Sigmoid colon (tissue), 7 donors: ENCODE measurements at regions of chr12 and their contacts with region 1.

Region 1: GRCh38 chr12:123232807-123233543 is at the starts of genes MPHOSPH9 and MTRFR:
- DNase-seq: peak; percentile 100
- H3K4me3 ChIP-seq: peak within 1 kb of the TSS; percentile 59 to 94 (median 86)
- H3K27ac ChIP-seq: peak within 1 kb of the TSS; percentile 90 to 95 (median 93)
- H3K4me1 ChIP-seq: peaks cover 0 to 42% (median 24%) of the 10 kb centered on the region in 4 donors
- H3K27me3 ChIP-seq: no peaks in the 10 kb centered on the region
- CTCF ChIP-seq: no peak
- EP300 ChIP-seq: no peak
- POLR2A ChIP-seq: peak; percentile 94 to 97
- total RNA-seq, gene MPHOSPH9: 17.4 to 47.6 (median 22.6) TPM
- total RNA-seq, gene MTRFR: 9.3 to 19.1 (median 13.5) TPM

Region 2: DNA sequence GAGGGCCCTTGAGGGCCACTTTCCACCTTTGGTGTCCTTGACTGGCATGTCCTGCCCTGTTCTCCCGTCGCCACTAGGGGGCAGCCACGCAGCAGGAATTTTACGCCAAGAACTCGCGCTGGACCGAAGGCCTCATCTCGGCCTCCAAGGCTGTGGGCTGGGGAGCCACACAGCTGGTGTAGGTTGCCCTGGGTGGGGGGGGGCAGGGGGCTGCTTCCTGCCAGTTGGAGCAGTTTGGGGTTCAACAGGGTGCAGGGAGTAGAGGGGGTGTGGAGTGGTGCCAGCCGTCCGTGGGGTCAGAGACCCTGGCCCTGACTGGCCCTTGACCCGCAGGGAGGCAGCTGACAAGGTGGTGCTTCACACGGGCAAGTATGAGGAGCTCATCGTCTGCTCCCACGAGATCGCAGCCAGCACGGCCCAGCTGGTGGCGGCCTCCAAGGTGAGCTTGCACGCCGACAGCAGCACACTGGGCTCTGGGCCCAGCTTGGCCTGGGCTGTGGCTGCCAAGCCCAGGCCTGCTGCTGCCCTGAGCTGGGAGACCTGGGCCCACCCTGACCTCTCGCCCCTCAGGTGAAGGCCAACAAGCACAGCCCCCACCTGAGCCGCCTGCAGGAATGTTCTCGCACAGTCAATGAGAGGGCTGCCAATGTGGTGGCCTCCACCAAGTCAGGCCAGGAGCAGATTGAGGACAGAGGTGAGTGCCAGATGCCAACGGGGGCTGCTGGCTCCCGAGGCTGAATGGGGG is 372.5 kb before region 1 on chr12:
- intact Hi-C with region 1: loop called (anchors 2 kb)
- DNase-seq: peak; percentile 92
- H3K4me3 ChIP-seq: no peak overlapping the region
- H3K27ac ChIP-seq: peak overlapping the region in 2 of 4 donors; percentile 14 to 62
- H3K4me1 ChIP-seq: peaks cover 0 to 10% (median 8%) of the 10 kb centered on the region in 4 donors
- H3K27me3 ChIP-seq: no peaks in the 10 kb centered on the region
- CTCF ChIP-seq: peak; percentile 91 to 97 (median 95)
- EP300 ChIP-seq: no peak
- POLR2A ChIP-seq: no peak

Region 3: DNA sequence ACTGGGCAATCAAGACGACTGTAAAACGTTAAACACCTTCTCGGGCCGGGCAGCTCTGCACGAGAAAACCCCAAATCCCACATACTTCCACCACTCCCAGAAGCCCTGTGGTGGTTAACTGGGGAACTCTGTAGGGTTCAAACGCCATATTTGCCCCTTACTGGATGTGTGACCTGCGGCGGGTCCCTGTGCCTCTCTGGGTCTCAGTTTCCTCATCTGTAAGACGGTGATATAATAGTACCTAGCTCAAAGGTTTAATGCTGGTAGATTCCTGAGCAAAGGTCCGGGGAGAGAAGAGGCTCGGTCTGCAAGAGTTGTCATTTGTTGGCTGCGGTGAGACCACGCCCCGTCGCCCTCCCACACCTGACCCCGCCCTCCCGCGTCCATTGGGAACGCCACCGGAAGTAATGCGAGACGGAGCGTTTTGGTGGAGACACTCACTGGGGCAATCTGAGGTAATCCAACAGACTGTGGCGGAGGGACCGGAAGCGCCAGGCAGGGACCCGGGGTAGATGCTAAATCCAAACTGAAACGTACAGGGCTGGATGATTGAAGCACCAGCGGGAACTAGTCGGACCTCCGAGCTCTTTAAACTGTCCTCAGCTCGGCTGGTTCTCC is 258.6 kb before region 1 on chr12:
- intact Hi-C with region 1: loop called (anchors 2 kb)
- DNase-seq: peak; percentile 99
- H3K4me3 ChIP-seq: peak overlapping the region; percentile 84 to 96 (median 89)
- H3K27ac ChIP-seq: peak overlapping the region; percentile 97 to 99 (median 98)
- H3K4me1 ChIP-seq: peaks cover 0 to 49% (median 38%) of the 10 kb centered on the region in 4 donors
- H3K27me3 ChIP-seq: no peaks in the 10 kb centered on the region
- CTCF ChIP-seq: no peak
- EP300 ChIP-seq: no peak
- POLR2A ChIP-seq: no peak

Region 4: DNA sequence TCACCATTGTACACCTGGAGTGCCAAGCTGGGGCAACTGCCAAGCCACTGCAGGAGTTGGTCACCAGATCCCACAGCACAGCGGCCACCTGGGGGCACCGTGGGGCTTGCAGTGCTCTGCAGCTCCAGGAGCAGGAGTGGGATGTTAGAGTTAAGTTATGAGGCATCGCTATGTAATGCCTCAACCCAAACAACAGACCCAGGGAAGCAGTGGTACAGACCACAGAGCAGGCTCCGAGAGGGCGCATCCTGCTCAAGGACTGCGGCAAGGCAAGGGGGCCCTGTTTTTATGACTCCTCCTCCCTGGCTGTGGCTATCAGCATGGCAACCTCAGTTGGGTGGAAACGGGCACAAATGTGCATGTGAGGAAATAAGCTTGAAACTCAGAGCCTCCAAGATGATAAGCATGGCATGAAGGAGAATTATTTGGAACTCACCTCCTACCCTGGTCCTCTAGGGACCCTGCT is 189.4 kb before region 1 on chr12:
- intact Hi-C with region 1: loop called (anchors 1 kb)
- DNase-seq: peak; percentile 95
- H3K4me3 ChIP-seq: no peak overlapping the region
- H3K27ac ChIP-seq: peak overlapping the region; percentile 63 to 82 (median 76)
- H3K4me1 ChIP-seq: peaks cover 0 to 69% (median 51%) of the 10 kb centered on the region in 4 donors
- H3K27me3 ChIP-seq: no peaks in the 10 kb centered on the region
- CTCF ChIP-seq: peak; percentile 71 to 89 (median 80)
- EP300 ChIP-seq: no peak
- POLR2A ChIP-seq: no peak

Region 5: GRCh38 chr12:123150744-123151456 is 82.1 kb before region 1 on chr12 and contains the start of gene PITPNM2:
- intact Hi-C with region 1: loop called (anchors 5 kb)
- DNase-seq: peak; percentile 78
- H3K4me3 ChIP-seq: peak within 1 kb of the TSS; percentile 54 to 86 (median 82)
- H3K27ac ChIP-seq: peak within 1 kb of the TSS; percentile 88 to 95 (median 92)
- H3K4me1 ChIP-seq: peaks cover 0 to 33% (median 28%) of the 10 kb centered on the region in 4 donors
- H3K27me3 ChIP-seq: no peaks in the 10 kb centered on the region
- CTCF ChIP-seq: peak in 1 of 4 experiments; percentile 33
- EP300 ChIP-seq: no peak
- POLR2A ChIP-seq: no peak
- total RNA-seq, gene PITPNM2: 6.4 to 19.5 (median 11.7) TPM

Region 6: DNA sequence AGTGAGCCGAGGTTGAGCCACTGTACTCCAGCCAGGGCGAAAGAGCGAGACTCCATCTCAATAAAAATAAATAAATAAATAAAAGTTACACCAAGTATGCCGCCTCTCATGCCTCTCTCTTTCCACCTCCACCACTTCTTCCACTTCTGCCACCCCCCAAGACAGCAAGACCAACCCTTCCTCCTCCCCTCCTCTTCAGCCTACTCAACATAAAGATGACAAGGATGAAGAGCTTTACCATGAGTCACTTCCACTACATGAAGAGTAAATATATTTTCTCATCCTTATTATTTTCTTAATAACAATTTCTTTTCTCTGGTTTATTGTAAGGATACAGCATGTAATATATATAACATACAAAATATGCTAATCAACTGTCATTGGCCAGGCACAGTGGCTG is 347.8 kb after region 1 on chr12:
- intact Hi-C with region 1: loop called (anchors 5 kb)
- DNase-seq: no peak
- H3K4me3 ChIP-seq: no peak overlapping the region
- H3K27ac ChIP-seq: no peak overlapping the region
- H3K4me1 ChIP-seq: peaks cover 0 to 27% (median 26%) of the 10 kb centered on the region in 4 donors
- H3K27me3 ChIP-seq: no peaks in the 10 kb centered on the region
- CTCF ChIP-seq: no peak
- EP300 ChIP-seq: no peak
- POLR2A ChIP-seq: no peak